Activated naive CD4-positive, alpha-beta T cell treated with anti-CD3 and anti-CD28 coated beads for 36 hours (primary cell): ENCODE measurements at regions of chr9 and their contacts with region 1.

Region 1: DNA sequence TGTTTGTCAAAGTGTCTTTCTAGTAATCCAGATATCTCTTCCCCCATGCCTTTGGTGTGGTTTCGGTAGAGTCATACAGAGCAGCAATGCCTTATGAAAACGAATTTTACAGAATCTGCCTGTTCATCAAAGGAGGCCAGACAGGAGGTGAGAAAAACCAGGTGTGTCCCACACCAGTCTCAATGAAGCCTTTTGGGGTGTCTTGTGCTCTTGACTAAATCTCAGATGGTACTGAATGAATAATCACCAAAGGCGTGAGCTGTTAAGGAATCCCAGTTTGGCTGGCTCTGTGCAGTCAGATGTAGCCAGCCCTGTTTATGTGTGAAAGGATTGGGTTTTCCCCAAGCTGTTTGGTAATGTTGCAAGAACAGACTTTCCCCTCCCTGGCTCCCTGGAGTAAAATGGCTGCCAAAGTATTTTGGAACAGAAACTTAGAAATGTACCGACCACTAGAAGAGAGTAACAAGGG is 70.8 kb upstream of the CDKN2B start:
- DNase-seq: peak; percentile 84
- H3K4me3 Mint-ChIP-seq: no peak overlapping the region
- H3K27ac Mint-ChIP-seq: no peak overlapping the region
- H3K4me1 Mint-ChIP-seq: peaks cover 33% of the 10 kb centered on the region
- H3K27me3 Mint-ChIP-seq: peaks cover 50% of the 10 kb centered on the region

Region 2: GRCh38 chr9:21576331-21577189 is 503.3 kb before region 1 on chr9:
- CTCF ChIA-PET with region 1: no interaction called
- intact Hi-C with region 1: loop called (anchors 2 kb)
- DNase-seq: peak; percentile 80
- H3K4me3 Mint-ChIP-seq: peak overlapping the region; percentile 3
- H3K27ac Mint-ChIP-seq: peak overlapping the region; percentile 68
- H3K4me1 Mint-ChIP-seq: peaks cover 37% of the 10 kb centered on the region
- H3K27me3 Mint-ChIP-seq: peaks cover 2% of the 10 kb centered on the region

Region 3: DNA sequence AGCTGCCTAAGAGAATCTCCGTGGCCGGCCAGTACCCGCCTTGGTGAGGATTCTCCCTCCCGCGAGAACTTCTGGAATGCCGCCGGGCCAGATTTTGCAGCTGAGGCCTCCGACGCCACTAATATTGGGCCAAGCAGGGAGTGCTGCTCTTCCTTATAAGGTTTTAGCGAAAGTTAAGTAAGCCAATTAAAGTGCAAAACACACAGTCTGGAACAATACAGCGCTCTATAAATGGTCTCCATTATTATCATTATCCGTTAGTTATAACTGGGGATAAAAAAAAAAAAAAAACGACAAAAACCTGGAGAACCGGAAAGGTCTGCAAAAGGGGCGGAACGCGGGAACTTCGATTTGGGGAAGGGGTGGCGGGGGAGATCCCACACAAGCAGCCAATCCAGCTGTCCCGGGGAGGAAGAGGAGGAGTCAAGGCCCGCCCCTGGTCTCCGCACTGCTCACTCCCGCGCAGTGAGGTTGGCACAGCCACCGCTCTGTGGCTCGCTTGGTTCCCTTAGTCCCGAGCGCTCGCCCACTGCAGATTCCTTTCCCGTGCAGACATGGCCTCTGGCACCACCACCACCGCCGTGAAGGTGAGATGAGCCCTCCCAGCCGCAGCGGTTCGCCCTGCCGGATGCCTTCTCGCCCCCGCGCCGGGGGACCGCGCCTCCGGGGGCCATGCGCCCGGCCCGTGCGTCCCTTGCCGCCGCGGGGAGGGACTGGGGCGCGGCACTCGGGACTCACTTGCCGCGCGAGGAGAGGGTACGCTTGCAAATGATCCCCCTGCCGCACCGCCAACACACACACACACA is 277.5 kb before region 1 on chr9 and contains the start of gene MTAP:
- CTCF ChIA-PET with region 1: no interaction called
- intact Hi-C with region 1: loop called (anchors 2 kb)
- DNase-seq: peak; percentile 82
- H3K4me3 Mint-ChIP-seq: peak within 1 kb of the TSS; percentile 99
- H3K27ac Mint-ChIP-seq: peak within 1 kb of the TSS; percentile 97
- H3K4me1 Mint-ChIP-seq: peaks cover 41% of the 10 kb centered on the region
- H3K27me3 Mint-ChIP-seq: peaks cover 4% of the 10 kb centered on the region
- total RNA-seq, gene MTAP: 59.0 to 66.4 TPM

Region 4: DNA sequence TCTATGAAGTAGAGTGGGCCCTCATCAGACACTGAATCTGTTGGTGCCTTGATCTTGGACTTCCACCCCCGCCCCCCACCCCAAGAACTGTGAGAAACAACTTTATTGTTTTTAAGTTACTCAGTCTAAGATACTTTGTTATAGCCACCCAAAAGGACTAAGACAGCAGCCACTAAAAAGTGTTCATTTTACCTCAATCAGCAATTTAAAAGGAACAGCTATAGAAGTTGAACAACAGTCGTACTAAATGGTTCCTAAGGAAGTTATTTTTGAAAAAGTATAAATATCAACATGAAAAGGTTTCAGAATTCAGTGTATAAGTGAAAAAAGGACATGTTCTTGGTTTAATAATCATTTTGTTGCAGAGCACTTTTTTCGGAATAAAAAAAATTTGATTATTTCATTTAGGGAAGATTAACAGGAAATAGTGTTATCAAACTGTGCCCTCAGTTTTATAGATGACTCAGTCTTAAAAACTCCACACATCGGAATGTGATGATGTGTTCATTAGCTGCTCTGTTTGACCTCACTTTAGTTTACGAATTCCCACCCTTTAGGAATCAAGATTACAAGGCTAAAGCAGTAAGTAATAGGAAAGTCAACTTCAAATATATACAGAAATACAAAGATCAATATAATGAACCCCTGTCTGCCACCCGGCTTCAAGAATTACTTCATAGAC is 206.2 kb before region 1 on chr9:
- CTCF ChIA-PET with region 1: no interaction called
- intact Hi-C with region 1: no loop called
- DNase-seq: no peak
- H3K4me3 Mint-ChIP-seq: no peak overlapping the region
- H3K27ac Mint-ChIP-seq: no peak overlapping the region
- H3K4me1 Mint-ChIP-seq: peaks cover 2% of the 10 kb centered on the region
- H3K27me3 Mint-ChIP-seq: no peaks in the 10 kb centered on the region

Region 5: GRCh38 chr9:22008736-22009562 is 71.0 kb before region 1 on chr9 and contains the start of gene CDKN2B:
- CTCF ChIA-PET with region 1: interaction called, 7 read pairs
- intact Hi-C with region 1: loop called (anchors 2 kb)
- DNase-seq: peak; percentile 63
- H3K4me3 Mint-ChIP-seq: peak within 1 kb of the TSS; percentile 74
- H3K27ac Mint-ChIP-seq: no peak within 1 kb of the TSS
- H3K4me1 Mint-ChIP-seq: peaks cover 18% of the 10 kb centered on the region
- H3K27me3 Mint-ChIP-seq: peaks cover 62% of the 10 kb centered on the region
- total RNA-seq, gene CDKN2B: not detected

Region 6: GRCh38 chr9:22105005-22105722 is 25.3 kb after region 1 on chr9:
- CTCF ChIA-PET with region 1: interaction called, 4 read pairs
- intact Hi-C with region 1: loop called (anchors 1 kb)
- DNase-seq: no peak
- H3K4me3 Mint-ChIP-seq: no peak overlapping the region
- H3K27ac Mint-ChIP-seq: no peak overlapping the region
- H3K4me1 Mint-ChIP-seq: peaks cover 5% of the 10 kb centered on the region
- H3K27me3 Mint-ChIP-seq: peaks cover 6% of the 10 kb centered on the region

Region 7: DNA sequence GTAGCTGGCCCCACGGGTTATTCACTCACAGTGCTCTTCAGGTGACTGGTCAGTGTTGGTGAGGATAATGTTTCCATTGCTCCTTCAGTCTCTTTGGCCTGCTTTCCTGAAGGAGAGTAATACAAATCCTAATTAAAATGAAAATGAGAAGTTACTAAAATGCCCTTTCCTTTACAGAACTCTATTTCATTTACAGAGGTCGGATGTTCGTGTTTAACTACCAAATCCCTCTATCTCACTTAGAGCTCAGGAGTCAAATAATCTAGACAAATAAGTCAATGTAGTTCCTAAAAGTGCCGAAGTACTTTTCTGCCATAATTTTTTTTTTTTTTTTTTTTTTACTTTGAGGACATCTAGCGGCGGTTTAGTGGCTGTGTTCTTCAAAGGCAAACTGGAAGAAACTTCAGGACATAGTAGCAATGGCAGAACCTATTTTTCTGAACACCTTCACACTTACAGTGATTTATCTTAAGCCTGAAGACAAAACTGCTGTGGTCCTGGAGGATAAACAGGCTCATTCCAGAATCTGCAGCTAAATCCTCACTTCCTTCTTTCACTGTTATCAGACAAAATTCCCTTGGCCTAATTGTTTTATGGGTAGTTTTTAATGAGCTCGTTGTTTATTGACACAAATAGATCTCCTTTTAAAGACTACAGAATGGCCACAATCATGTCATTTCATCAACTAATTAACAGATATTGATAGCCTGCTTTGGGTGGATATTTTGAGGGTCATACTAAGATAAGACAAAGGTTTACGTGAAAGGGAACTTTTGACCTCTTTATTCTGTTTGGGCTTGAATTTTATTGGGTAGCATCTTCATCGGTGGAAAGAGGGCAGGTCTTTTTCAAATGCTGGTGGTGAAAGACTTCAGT is 159.1 kb after region 1 on chr9:
- CTCF ChIA-PET with region 1: interaction called, 12 read pairs
- intact Hi-C with region 1: loop called (anchors 1 kb)
- DNase-seq: no peak
- H3K4me3 Mint-ChIP-seq: no peak overlapping the region
- H3K27ac Mint-ChIP-seq: no peak overlapping the region
- H3K4me1 Mint-ChIP-seq: peaks cover 49% of the 10 kb centered on the region
- H3K27me3 Mint-ChIP-seq: peaks cover 15% of the 10 kb centered on the region